T-cell (primary cell): ENCODE measurements at regions of chr1 and their contacts with region 1.

Region 1: DNA sequence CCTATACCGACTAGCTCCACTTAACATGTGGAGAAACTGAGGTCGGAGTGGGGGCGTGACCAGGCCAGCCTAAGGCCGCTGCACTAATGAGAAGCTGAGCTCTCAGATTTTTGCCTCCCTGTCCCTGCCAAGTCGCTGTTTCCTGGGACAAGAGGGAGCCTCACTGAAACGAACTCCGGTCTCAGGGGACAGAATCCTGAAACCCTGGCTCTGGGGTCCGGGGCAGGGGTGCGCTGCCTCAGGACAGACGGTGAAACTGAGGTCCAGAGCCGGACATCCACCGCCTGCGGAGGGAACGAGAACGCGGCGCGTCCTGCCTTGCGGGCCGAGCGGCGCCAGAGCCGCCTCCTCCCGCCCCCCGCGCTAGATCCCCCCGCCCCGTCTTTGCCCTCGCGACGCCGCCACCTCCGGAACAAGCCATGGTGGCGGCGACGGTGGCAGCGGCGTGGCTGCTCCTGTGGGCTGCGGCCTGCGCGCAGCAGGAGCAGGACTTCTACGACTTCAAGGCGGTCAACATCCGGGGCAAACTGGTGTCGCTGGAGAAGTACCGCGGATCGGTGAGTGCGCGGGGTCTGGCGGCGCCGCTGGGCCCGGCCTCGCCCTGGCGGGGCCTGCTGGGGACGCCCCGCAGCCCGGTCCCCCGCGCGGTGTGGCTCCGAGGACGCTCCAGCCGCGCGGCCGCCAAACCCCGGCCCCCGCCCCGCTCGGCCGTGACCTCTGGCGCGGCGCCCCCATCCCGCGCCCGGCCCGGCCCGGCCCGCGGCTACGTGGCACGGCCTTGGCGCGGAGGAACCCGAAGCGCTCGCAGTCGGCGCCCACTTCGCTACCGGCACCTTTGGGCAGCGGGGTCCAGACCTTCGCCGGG is at the start of gene GPX7:
- DNase-seq: peak; percentile 27 to 76 (median 55)
- ATAC-seq: peak; percentile 78 to 87 (median 84)
- H3K4me3 ChIP-seq: peak within 1 kb of the TSS; percentile 61 to 71
- H3K4me3 Mint-ChIP-seq: peak within 1 kb of the TSS; percentile 86 to 92 (median 88)
- H3K27ac ChIP-seq: peak within 1 kb of the TSS; percentile 71
- H3K27ac Mint-ChIP-seq: peak within 1 kb of the TSS; percentile 94 to 97
- H3K4me1 ChIP-seq: peaks cover 9 to 42% of the 10 kb centered on the region in 2 experiments
- H3K4me1 Mint-ChIP-seq: peaks cover 53 to 61% (median 56%) of the 10 kb centered on the region in 3 donors
- H3K27me3 ChIP-seq: no peaks in the 10 kb centered on the region
- H3K27me3 Mint-ChIP-seq: no peaks in the 10 kb centered on the region
- total RNA-seq, gene GPX7: 13.4 to 28.1 (median 22.9) TPM

Region 2: DNA sequence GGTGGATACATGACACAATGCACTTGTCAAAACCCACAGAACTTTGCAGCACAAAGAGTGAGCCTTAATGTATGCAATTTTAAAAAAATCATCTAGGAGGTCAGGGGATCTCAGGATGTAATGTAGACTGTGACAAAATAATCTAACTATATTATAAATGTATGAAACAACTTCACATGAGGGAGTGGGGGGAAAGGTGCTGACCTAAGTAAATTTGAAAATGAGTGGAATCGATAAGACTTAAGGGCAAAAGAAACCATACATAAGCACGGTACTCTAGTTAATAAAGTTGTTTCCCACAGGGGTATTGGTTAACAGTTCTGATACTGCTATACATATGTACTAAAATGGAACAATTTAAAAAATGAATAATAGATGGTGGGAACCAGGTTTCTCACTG is 133.1 kb before region 1 on chr1:
- CTCF ChIA-PET with region 1: no interaction called
- POLR2A ChIA-PET with region 1: interaction called in 1 of 2 experiments, 14 read pairs
- DNase-seq: no peak
- ATAC-seq: no peak
- H3K4me3 ChIP-seq: no peak overlapping the region
- H3K4me3 Mint-ChIP-seq: no peak overlapping the region
- H3K27ac ChIP-seq: no peak overlapping the region
- H3K27ac Mint-ChIP-seq: no peak overlapping the region
- H3K4me1 ChIP-seq: no peaks in the 10 kb centered on the region
- H3K4me1 Mint-ChIP-seq: peaks cover 5 to 10% (median 9%) of the 10 kb centered on the region in 3 donors
- H3K27me3 ChIP-seq: no peaks in the 10 kb centered on the region
- H3K27me3 Mint-ChIP-seq: no peaks in the 10 kb centered on the region

Region 3: GRCh38 chr1:52544665-52545525 is 57.3 kb before region 1 on chr1:
- CTCF ChIA-PET with region 1: no interaction called
- POLR2A ChIA-PET with region 1: no interaction called
- DNase-seq: no peak
- ATAC-seq: no peak
- H3K4me3 ChIP-seq: no peak overlapping the region
- H3K4me3 Mint-ChIP-seq: no peak overlapping the region
- H3K27ac ChIP-seq: no peak overlapping the region
- H3K27ac Mint-ChIP-seq: no peak overlapping the region
- H3K4me1 ChIP-seq: peaks cover 3 to 14% of the 10 kb centered on the region in 2 experiments
- H3K4me1 Mint-ChIP-seq: peaks cover 37 to 46% (median 41%) of the 10 kb centered on the region in 3 donors
- H3K27me3 ChIP-seq: no peaks in the 10 kb centered on the region
- H3K27me3 Mint-ChIP-seq: no peaks in the 10 kb centered on the region

Region 4: GRCh38 chr1:52579415-52579814 is 22.8 kb before region 1 on chr1:
- CTCF ChIA-PET with region 1: no interaction called
- POLR2A ChIA-PET with region 1: no interaction called
- DNase-seq: no peak
- ATAC-seq: no peak
- H3K4me3 ChIP-seq: no peak overlapping the region
- H3K4me3 Mint-ChIP-seq: no peak overlapping the region
- H3K27ac ChIP-seq: no peak overlapping the region
- H3K27ac Mint-ChIP-seq: peak overlapping the region; percentile 18 to 37
- H3K4me1 ChIP-seq: peaks cover 0 to 4% of the 10 kb centered on the region in 2 experiments
- H3K4me1 Mint-ChIP-seq: peaks cover 5 to 16% (median 15%) of the 10 kb centered on the region in 3 donors
- H3K27me3 ChIP-seq: no peaks in the 10 kb centered on the region
- H3K27me3 Mint-ChIP-seq: no peaks in the 10 kb centered on the region

Region 5: GRCh38 chr1:52590275-52590674 is 11.9 kb before region 1 on chr1:
- CTCF ChIA-PET with region 1: no interaction called
- POLR2A ChIA-PET with region 1: no interaction called
- DNase-seq: no peak
- ATAC-seq: no peak
- H3K4me3 ChIP-seq: no peak overlapping the region
- H3K4me3 Mint-ChIP-seq: no peak overlapping the region
- H3K27ac ChIP-seq: no peak overlapping the region
- H3K27ac Mint-ChIP-seq: no peak overlapping the region
- H3K4me1 ChIP-seq: no peaks in the 10 kb centered on the region
- H3K4me1 Mint-ChIP-seq: peaks cover 0 to 10% (median 0%) of the 10 kb centered on the region in 3 donors
- H3K27me3 ChIP-seq: no peaks in the 10 kb centered on the region
- H3K27me3 Mint-ChIP-seq: no peaks in the 10 kb centered on the region